HepG2 (cell line): ENCODE measurements at regions of chr1 and their contacts with region 1.

Region 1: DNA sequence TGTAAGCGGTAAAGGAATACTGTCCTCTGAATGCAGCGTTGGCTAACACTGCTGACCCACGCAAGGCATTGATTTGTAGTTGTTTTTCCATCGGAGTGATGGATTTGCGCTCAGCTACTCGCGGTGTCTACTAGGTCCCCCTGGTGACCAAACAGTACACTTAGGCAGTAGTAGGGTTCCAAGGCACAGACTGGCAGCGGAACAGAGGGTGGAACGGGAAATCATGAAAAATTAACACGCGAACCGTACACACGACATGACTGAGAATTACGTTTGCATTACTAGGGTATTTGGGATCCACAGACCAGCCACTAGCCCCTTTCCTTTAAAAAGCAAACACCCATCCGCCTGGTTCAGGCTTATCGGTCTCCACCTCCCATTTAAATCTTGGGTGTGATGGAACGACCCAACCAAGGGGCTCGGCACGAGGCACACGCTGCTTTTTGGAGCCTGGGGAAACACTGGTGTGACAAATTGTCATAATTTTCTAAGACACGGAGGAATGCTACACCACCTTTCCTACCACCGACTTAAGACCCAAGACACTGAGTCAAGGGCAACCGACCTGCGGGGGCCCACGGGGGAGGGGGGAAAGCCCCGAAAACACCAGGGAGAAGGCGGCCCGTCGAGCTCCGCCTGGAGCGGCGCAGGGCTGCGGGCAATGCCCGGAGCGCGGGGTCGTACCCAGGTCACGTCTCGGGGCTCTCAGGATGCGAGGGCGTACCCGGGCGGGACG is 699 bp downstream of the DIPK1A start:
- DNase-seq: peak; percentile 81
- ATAC-seq: peak; percentile 85
- H3K4me3 ChIP-seq: peak overlapping the region; percentile 81 to 89 (median 84)
- H3K27ac ChIP-seq: peak overlapping the region; percentile 85
- H3K4me1 ChIP-seq: peaks cover 73% of the 10 kb centered on the region
- H3K27me3 ChIP-seq: peaks cover 2 to 13% of the 10 kb centered on the region in 2 experiments; a peak in 2 of 5 replicates
- CTCF ChIP-seq: peak; percentile 93
- EP300 ChIP-seq: no peak
- POLR2A ChIP-seq: 0 out of 4 replicates have a peak, but pooled peaks have one; percentile 10 to 32
- RAD21 ChIP-seq: peak; percentile 79

Region 2: GRCh38 chr1:92901699-92902405 is 58.7 kb before region 1 on chr1:
- CTCF ChIA-PET with region 1: no interaction called
- POLR2A ChIA-PET with region 1: no interaction called
- in situ Hi-C with region 1: no loop called
- intact Hi-C with region 1: loop called (anchors 5 kb)
- DNase-seq: no peak
- ATAC-seq: no peak
- H3K4me3 ChIP-seq: no peak overlapping the region
- H3K27ac ChIP-seq: no peak overlapping the region
- H3K4me1 ChIP-seq: peaks cover 10% of the 10 kb centered on the region
- H3K27me3 ChIP-seq: no peaks in the 10 kb centered on the region
- CTCF ChIP-seq: no peak
- EP300 ChIP-seq: no peak
- POLR2A ChIP-seq: no peak
- RAD21 ChIP-seq: no peak

Region 3: GRCh38 chr1:93029317-93029716 is 68.8 kb after region 1 on chr1:
- CTCF ChIA-PET with region 1: no interaction called
- POLR2A ChIA-PET with region 1: no interaction called
- in situ Hi-C with region 1: no loop called
- intact Hi-C with region 1: no loop called
- DNase-seq: no peak
- ATAC-seq: no peak
- H3K4me3 ChIP-seq: no peak overlapping the region
- H3K27ac ChIP-seq: no peak overlapping the region
- H3K4me1 ChIP-seq: no peaks in the 10 kb centered on the region
- H3K27me3 ChIP-seq: no peaks in the 10 kb centered on the region; a peak in 1 of 5 replicates
- CTCF ChIP-seq: no peak
- EP300 ChIP-seq: no peak
- POLR2A ChIP-seq: no peak
- RAD21 ChIP-seq: no peak

Region 4: DNA sequence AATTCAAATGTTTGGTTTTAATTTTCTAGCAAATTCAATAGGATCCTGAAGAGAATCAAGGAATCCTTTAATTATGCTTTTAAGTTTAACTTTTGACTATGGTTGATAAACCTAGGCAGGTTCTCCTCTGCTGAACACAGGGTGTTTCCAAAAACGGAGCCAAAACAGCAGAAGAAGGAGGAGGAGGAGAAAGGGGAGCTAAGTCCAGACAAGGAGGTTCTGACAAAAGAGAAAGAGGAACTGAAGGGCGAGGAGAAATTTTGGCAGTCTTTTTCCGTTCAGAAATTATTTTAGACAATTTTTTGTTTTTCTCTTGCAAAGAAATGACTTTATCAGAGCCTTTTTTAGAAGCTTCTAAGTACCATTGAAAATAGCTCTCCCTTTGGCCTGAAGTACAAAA is 454.2 kb after region 1 on chr1:
- CTCF ChIA-PET with region 1: no interaction called
- POLR2A ChIA-PET with region 1: no interaction called
- in situ Hi-C with region 1: no loop called
- intact Hi-C with region 1: no loop called
- DNase-seq: no peak
- ATAC-seq: no peak
- H3K4me3 ChIP-seq: no peak overlapping the region
- H3K27ac ChIP-seq: no peak overlapping the region
- H3K4me1 ChIP-seq: 0 out of 2 replicates have a peak, but pooled peaks cover 6% of the 10 kb centered on the region
- H3K27me3 ChIP-seq: peaks cover 0 to 5% of the 10 kb centered on the region in 2 experiments; a peak in 2 of 5 replicates
- CTCF ChIP-seq: no peak
- EP300 ChIP-seq: no peak
- POLR2A ChIP-seq: no peak
- RAD21 ChIP-seq: no peak